Activated B cell treated with CpG ODN at 0.5 μM for 24 hours (primary cell): ENCODE measurements at regions of chr19 and their contacts with region 1.

Region 1: DNA sequence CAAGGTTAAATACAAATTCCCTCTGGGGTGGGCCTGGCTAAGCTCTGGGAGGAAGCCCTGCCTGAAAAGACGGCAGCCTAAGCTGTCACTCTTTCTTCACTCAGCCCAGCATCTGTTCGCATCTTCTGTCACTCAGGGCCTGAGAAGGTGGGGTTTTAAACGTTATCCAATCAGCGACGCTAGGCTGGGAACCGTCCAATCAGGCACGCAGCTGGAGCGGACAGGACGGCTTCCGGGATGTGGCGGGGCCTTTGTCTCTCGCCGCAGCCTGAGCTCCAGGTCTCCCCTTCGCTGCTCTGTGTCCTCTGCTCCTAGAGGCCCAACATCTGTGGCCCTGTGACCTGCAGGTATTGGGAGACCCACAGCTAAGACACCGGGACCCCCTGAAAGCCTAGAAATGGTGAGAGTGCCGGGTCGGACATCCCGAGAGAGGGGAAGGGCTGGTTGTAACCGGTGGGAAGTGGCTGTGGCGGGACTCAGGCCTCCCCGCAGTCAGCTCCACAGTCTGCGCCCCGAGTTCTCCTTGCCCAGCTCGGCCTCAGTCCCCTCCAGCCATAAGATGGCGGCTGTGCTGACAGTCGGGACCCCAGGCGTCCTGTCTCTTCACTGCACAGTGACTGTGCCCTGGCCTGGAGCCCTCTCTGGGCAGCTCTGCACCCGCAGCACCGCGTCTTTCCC is at the start of gene ZNF431:
- DNase-seq: peak; percentile 73
- ATAC-seq: peak; percentile 99
- H3K4me3 Mint-ChIP-seq: peak within 1 kb of the TSS; percentile 100
- H3K27ac Mint-ChIP-seq: peak within 1 kb of the TSS; percentile 98
- H3K4me1 Mint-ChIP-seq: peaks cover 32% of the 10 kb centered on the region
- H3K27me3 Mint-ChIP-seq: no peaks in the 10 kb centered on the region
- CTCF ChIP-seq: no peak
- total RNA-seq, gene ZNF431: 33.2 and 34.9 TPM in 2 replicates

Region 2: GRCh38 chr19:20565321-20566018 is 576.5 kb before region 1 on chr19 and contains the start of gene ZNF737:
- CTCF ChIA-PET with region 1: no interaction called
- POLR2A ChIA-PET with region 1: interaction called, 10 read pairs
- intact Hi-C with region 1: loop called (anchors 5 kb)
- DNase-seq: peak; percentile 72
- ATAC-seq: peak; percentile 90
- H3K4me3 Mint-ChIP-seq: peak within 1 kb of the TSS; percentile 99
- H3K27ac Mint-ChIP-seq: peak within 1 kb of the TSS; percentile 99
- H3K4me1 Mint-ChIP-seq: peaks cover 32% of the 10 kb centered on the region
- H3K27me3 Mint-ChIP-seq: no peaks in the 10 kb centered on the region
- CTCF ChIP-seq: no peak
- total RNA-seq, gene ZNF737: 42.7 and 50.9 TPM in 2 replicates

Region 3: DNA sequence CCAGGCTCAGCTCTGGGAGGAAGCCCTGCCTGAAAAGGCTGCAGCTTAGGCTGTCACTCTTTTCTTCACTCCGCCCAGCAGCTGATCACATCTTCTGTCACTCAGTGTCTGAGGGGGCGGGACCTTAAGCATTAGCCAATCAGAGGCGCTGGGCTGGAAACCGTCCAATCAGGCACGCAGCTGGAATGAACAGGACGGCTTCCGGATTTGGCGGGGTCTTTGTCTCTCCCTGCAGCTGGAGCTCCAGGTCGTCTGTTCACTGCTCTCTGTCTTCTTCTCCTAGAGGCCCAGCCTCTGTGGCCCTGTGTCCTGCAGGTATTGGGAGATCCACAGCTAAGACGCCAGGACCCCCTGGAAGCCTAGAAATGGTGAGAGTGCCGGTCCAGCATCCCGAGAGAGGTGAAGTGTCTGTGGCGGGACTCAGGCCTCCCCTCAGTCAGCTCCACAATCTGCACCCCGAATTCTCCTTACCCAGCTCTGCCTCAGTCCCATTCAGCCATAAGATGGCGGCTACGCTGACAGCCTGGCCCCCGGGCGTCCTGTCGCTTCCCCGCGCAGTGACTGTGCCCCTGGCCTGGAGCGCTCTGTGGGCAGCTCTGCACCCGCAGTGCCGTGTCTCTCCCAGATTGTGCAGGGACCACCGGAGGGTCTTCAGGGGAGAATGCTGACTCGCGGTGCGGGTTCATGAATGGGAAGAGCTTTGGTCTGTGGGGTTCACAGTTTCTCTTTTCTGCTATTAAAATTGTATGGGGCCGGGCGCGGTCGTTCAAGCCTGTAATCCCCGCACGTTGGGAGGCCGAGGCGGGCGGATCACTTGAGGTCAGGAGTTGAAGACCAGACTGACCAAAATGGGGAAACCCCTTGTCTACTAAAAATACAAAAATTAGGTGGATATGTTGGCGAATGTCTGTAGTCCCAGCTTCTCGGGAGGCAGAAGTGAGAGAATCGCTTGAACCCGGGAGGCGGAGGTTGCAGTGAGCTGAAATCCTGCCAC is 365.5 kb before region 1 on chr19 and contains the start of gene ZNF66:
- CTCF ChIA-PET with region 1: no interaction called
- POLR2A ChIA-PET with region 1: interaction called, 11 read pairs
- intact Hi-C with region 1: loop called (anchors 5 kb)
- DNase-seq: peak; percentile 85
- ATAC-seq: peak; percentile 98
- H3K4me3 Mint-ChIP-seq: peak within 1 kb of the TSS; percentile 98
- H3K27ac Mint-ChIP-seq: peak within 1 kb of the TSS; percentile 91
- H3K4me1 Mint-ChIP-seq: peaks cover 10% of the 10 kb centered on the region
- H3K27me3 Mint-ChIP-seq: no peaks in the 10 kb centered on the region
- CTCF ChIP-seq: no peak
- total RNA-seq, gene ZNF66: 17.5 and 19.1 TPM in 2 replicates

Region 4: DNA sequence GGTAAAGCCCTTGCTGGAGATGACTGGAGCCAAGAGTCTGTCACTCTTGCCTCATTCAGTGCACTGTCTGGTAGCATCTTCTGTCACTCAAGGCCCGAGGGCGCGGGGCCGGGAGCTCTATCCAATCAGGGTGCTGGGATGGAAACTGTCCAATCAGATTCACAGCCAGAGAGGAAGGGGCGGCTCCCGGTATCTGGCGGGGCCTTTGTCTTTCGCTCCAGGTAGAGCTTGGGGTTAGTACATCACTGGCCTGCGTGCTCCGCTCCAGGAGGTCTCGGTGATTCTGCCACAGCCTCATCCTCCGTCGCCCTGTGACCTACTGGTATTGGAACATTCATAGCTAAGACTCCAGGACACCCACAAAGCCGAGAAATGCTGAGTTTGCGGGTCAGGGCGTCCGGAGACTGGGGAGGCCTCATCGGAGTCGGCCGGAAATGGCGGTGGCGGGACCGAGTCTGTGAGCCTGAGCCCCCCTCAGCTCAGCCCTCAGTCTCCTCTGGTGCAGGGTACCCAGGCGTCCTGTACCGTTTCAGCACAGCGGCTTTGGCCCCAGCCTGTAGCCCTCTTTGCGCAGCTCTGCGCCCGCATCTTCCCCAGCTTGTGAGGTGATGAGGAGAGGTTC is 142.1 kb before region 1 on chr19:
- CTCF ChIA-PET with region 1: no interaction called
- POLR2A ChIA-PET with region 1: interaction called, 11 read pairs
- intact Hi-C with region 1: loop called (anchors 5 kb)
- DNase-seq: peak; percentile 74
- ATAC-seq: peak; percentile 100
- H3K4me3 Mint-ChIP-seq: peak overlapping the region; percentile 91
- H3K27ac Mint-ChIP-seq: peak overlapping the region; percentile 70
- H3K4me1 Mint-ChIP-seq: peaks cover 6% of the 10 kb centered on the region
- H3K27me3 Mint-ChIP-seq: no peaks in the 10 kb centered on the region
- CTCF ChIP-seq: no peak

Region 5: DNA sequence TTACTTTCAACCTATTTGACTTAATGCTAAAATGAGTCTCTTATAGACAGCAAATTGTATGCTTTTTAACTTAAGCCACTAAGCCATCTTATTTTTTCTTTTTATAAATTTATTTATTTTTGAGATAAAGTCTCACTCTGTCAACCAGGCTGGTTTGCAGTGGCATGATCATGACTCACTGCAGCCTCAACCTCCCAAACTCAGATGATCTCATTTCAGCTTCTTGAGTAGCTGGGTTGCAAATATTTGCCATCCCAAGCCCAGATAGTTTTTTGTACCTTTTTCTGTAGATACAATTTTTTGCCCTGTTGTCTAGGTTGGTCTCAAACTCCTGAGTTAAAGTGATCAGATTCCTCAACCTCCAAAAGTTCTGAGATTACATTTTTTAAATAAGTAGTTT is 32.8 kb before region 1 on chr19:
- CTCF ChIA-PET with region 1: no interaction called
- POLR2A ChIA-PET with region 1: no interaction called
- intact Hi-C with region 1: no loop called
- DNase-seq: no peak
- ATAC-seq: no peak
- H3K4me3 Mint-ChIP-seq: no peak overlapping the region
- H3K27ac Mint-ChIP-seq: no peak overlapping the region
- H3K4me1 Mint-ChIP-seq: no peaks in the 10 kb centered on the region
- H3K27me3 Mint-ChIP-seq: no peaks in the 10 kb centered on the region
- CTCF ChIP-seq: no peak

Region 6: DNA sequence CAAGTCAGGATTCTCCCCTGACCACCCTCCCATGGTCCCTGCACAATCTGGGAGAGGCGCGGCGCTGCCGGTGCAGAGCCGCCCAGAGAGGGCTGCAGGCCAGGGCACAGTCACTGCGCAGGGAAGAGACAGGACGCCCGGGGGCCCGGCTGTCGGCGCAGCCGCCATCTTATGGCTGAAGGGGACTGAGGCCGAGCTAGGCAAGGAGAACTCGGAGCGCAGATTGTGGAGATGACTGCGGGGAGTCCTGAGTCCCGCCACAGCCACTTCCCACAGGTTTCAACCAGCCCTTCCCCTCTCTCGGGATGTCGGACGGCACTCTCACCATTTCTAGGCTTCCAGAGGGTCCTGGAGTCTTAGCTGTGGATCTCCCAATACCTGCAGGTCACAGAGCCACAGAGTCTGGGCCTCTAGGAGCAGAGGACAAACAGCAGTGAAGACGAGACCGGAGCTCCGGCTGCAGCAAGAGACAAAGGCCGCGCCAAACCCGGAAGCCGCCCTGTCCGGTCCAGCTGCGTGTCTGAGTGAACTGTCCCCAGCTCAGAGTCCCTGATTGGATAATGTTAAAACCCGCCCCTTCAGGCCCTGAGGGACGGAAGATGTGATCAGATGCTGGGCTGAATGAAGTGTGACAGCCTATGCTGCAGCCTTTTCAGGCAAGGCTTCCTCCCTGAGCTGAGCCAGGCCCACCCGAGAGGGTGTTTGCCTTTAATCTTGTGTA is 187.1 kb after region 1 on chr19 and contains the start of gene ZNF708:
- CTCF ChIA-PET with region 1: no interaction called
- POLR2A ChIA-PET with region 1: interaction called, 12 read pairs
- intact Hi-C with region 1: no loop called
- DNase-seq: peak; percentile 55
- ATAC-seq: peak; percentile 99
- H3K4me3 Mint-ChIP-seq: peak within 1 kb of the TSS; percentile 99
- H3K27ac Mint-ChIP-seq: peak within 1 kb of the TSS; percentile 99
- H3K4me1 Mint-ChIP-seq: peaks cover 39% of the 10 kb centered on the region
- H3K27me3 Mint-ChIP-seq: no peaks in the 10 kb centered on the region
- CTCF ChIP-seq: no peak
- total RNA-seq, gene ZNF708: 24.3 and 30.6 TPM in 2 replicates

Region 7: GRCh38 chr19:21396893-21397572 is 255.1 kb after region 1 on chr19 and contains the start of gene ZNF493:
- CTCF ChIA-PET with region 1: no interaction called
- POLR2A ChIA-PET with region 1: interaction called, 3 read pairs
- intact Hi-C with region 1: loop called (anchors 10 kb)
- DNase-seq: peak; percentile 75
- ATAC-seq: peak; percentile 100
- H3K4me3 Mint-ChIP-seq: peak within 1 kb of the TSS; percentile 99
- H3K27ac Mint-ChIP-seq: peak within 1 kb of the TSS; percentile 91
- H3K4me1 Mint-ChIP-seq: peaks cover 29% of the 10 kb centered on the region
- H3K27me3 Mint-ChIP-seq: no peaks in the 10 kb centered on the region
- CTCF ChIP-seq: no peak
- total RNA-seq, gene ZNF493: 45.0 and 52.7 TPM in 2 replicates

Region 8: GRCh38 chr19:21608571-21608970 is 466.6 kb after region 1 on chr19:
- CTCF ChIA-PET with region 1: no interaction called
- POLR2A ChIA-PET with region 1: no interaction called
- intact Hi-C with region 1: no loop called
- DNase-seq: no peak
- ATAC-seq: no peak
- H3K4me3 Mint-ChIP-seq: no peak overlapping the region
- H3K27ac Mint-ChIP-seq: no peak overlapping the region
- H3K4me1 Mint-ChIP-seq: peaks cover 17% of the 10 kb centered on the region
- H3K27me3 Mint-ChIP-seq: no peaks in the 10 kb centered on the region
- CTCF ChIP-seq: no peak

Region 9: DNA sequence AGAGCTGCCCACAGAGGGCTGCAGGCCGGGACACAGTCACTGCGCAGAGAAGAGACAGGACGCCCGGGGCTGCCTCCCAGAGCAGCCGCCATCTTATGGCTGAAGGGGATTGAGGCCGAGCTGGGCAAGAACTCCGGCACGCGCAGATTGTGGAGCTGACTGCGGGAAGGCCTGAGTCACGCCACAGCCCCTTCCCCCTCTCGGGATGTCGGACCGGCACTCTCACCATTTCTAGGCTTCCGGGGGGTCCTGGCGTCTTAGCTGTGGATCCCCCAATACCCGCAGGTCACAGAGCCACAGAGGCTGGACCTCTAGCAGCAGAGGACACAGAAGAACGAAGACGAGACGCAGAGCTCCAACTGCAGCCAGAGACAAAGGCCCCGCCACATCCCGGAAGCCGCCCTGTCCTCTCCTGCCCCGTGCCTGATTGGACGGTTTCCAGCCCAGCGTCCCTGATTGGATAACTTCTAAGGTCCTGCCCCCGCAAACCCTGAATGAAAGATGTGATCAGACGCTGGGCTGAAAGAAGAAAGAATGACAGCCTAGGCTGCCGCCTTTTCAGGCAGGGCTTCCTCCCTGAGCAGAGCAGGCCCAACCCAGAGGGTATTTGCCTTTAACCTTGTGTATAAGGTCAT is 694.0 kb after region 1 on chr19 and contains the start of gene ZNF43:
- CTCF ChIA-PET with region 1: no interaction called
- POLR2A ChIA-PET with region 1: interaction called, 3 read pairs
- intact Hi-C with region 1: loop called (anchors 5 kb)
- DNase-seq: peak; percentile 77
- ATAC-seq: peak; percentile 98
- H3K4me3 Mint-ChIP-seq: peak within 1 kb of the TSS; percentile 100
- H3K27ac Mint-ChIP-seq: peak within 1 kb of the TSS; percentile 100
- H3K4me1 Mint-ChIP-seq: peaks cover 38% of the 10 kb centered on the region
- H3K27me3 Mint-ChIP-seq: no peaks in the 10 kb centered on the region
- CTCF ChIP-seq: no peak
- total RNA-seq, gene ZNF43: 41.8 and 52.4 TPM in 2 replicates